ENCODE measurements at regions of chr13 and their contacts with region 1.

Region 1: DNA sequence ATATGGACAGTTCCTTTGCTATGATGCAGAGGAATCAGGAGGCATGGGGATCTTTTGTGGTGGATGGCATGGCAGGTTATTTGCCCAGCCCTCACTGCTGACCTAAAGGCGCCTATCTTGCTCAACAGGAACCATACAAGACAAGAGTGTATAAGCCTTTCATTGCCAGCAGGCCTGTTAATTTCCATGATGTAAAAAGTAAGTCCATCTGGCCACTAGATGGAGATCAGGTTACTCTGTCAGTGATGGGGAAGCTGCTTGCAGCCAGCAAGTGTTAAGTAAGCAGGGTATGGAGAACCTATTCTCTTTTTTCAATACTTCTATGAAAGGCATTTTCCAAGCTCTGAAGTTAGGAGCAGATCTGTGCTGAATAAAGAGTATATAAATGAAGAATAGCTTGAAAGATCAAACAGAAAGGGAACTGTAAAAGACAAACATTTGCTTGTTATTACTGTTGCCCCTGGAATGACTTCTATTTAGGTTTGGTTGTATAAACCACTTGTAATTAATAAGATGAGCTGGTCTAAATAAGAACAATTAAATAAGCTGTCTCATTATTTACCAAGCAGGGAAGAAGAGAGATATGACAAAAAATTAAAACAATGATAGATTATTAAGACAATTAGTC is 210.9 kb downstream of the RGCC start:
- DNase-seq: peak; percentile 56
- H3K4me3 Mint-ChIP-seq: no peak overlapping the region
- H3K27ac Mint-ChIP-seq: no peak overlapping the region
- H3K4me1 Mint-ChIP-seq: no peaks in the 10 kb centered on the region
- H3K27me3 Mint-ChIP-seq: no peaks in the 10 kb centered on the region

Region 2: DNA sequence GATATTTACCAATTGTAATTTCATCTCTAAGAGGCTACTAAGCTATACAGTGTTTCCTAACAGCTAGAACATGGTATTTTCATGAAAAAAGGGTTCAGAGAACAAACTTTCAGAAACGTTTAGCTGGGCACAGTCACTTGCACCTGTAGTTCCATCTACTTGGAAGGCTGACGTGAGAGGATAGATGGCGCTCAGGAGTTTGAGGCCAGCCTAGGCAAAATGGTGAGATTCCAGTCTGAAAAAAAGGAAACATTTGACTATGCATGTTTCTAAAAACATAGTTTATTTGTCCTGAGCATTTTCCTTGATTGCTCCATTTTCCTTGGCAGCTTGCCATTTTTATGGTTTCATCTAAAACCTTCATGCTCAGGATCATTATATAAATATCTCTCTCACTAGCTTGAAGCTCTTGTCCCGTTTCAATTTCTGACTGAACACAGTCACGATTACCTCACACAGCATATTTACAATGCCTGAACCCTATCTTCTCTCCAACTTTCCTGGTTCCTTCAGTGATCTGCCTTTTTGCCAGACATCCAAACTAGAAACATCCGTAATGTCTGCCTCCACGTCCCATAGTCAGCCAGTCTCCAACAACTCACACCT is 10.1 kb before region 1 on chr13:
- CTCF ChIA-PET with region 1: interaction called, 14 read pairs
- DNase-seq: no peak
- H3K4me3 Mint-ChIP-seq: no peak overlapping the region
- H3K27ac Mint-ChIP-seq: no peak overlapping the region
- H3K4me1 Mint-ChIP-seq: no peaks in the 10 kb centered on the region
- H3K27me3 Mint-ChIP-seq: no peaks in the 10 kb centered on the region

Region 3: DNA sequence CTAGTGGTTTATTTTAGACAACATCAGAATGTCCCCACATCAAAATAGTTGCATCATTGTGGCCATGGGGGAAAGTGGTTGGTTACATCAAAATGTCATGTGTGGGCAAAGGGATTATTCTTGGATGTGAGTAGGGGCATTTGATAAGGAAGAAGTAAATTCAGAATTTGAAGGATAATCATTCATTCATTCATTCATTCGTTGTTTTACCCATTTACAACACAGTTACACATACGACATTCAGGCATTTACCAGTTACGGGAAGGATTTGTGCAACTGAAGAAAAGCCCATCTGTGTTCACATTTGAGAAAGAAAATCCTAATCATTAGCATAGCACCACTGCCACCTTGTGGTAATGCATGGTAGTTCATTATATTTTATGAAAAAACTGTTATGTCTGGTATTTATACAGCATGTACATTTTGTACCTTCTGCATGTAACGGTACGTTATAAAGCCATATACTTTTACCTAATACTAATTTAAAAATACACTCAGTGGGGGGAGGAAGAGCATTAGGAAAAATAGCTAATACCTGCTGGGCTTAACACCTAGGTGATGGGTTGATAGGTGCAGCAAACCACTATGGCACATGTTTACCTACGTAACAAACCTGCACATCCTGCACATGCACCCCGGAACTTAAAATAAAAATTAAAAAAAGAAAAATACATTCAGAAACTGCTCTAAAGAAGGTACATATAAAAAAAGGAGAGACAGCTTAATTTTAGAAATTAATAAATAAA is 442.3 kb after region 1 on chr13:
- CTCF ChIA-PET with region 1: interaction called, 48 read pairs
- DNase-seq: peak; percentile 43
- H3K4me3 Mint-ChIP-seq: no peak overlapping the region
- H3K27ac Mint-ChIP-seq: no peak overlapping the region
- H3K4me1 Mint-ChIP-seq: peaks cover 6% of the 10 kb centered on the region
- H3K27me3 Mint-ChIP-seq: no peaks in the 10 kb centered on the region